Motor neuron (in vitro differentiated cells): ENCODE measurements at regions of chr14 and their contacts with region 1.

Region 1: GRCh38 chr14:92951912-92952471 is 29.0 kb downstream of the CHGA start:
- ATAC-seq: peak; percentile 77 to 96 (median 90)
- H3K4me3 ChIP-seq: no peak overlapping the region
- H3K27ac ChIP-seq: no peak overlapping the region
- H3K4me1 ChIP-seq: no peaks in the 10 kb centered on the region

Region 2: GRCh38 chr14:93115069-93115820 is 163.3 kb after region 1 on chr14:
- in situ Hi-C with region 1: loop called in 3 of 9 experiments (anchors 25 kb)
- ATAC-seq: peak; percentile 79 to 90 (median 86)
- H3K4me3 ChIP-seq: peak overlapping the region; percentile 51 to 88 (median 68)
- H3K27ac ChIP-seq: peak overlapping the region; percentile 81 to 90
- H3K4me1 ChIP-seq: peaks cover 14 to 22% of the 10 kb centered on the region in 2 donors

Region 3: GRCh38 chr14:93132470-93133065 is 180.6 kb after region 1 on chr14:
- in situ Hi-C with region 1: loop called in 2 of 9 experiments (anchors 25 kb)
- ATAC-seq: peak in 2 of 8 experiments; percentile 48 to 64
- H3K4me3 ChIP-seq: no peak overlapping the region
- H3K27ac ChIP-seq: no peak overlapping the region
- H3K4me1 ChIP-seq: peaks cover 0 to 2% of the 10 kb centered on the region in 2 donors